Activated naive CD8-positive, alpha-beta T cell treated with anti-CD3 and anti-CD28 coated beads, Interleukin-2, amount 10 ng/mL, durations not matched to agents 7 days and 5 days (primary cell): ENCODE measurements at regions of chr10 and their contacts with region 1.

Region 1: GRCh38 chr10:103918053-103918846 is at the start of gene STN1:
- DNase-seq: peak; percentile 93
- ATAC-seq: peak; percentile 93
- H3K4me3 Mint-ChIP-seq: peak within 1 kb of the TSS; percentile 97
- H3K27ac Mint-ChIP-seq: peak within 1 kb of the TSS; percentile 96
- H3K4me1 Mint-ChIP-seq: peaks cover 27% of the 10 kb centered on the region
- H3K27me3 Mint-ChIP-seq: no peaks in the 10 kb centered on the region
- total RNA-seq, gene STN1: 53.7 to 58.5 TPM

Region 2: GRCh38 chr10:103727546-103727963 is 190.7 kb before region 1 on chr10:
- POLR2A ChIA-PET with region 1: no interaction called
- DNase-seq: no peak
- ATAC-seq: no peak
- H3K4me3 Mint-ChIP-seq: no peak overlapping the region
- H3K27ac Mint-ChIP-seq: no peak overlapping the region
- H3K4me1 Mint-ChIP-seq: peaks cover 4% of the 10 kb centered on the region
- H3K27me3 Mint-ChIP-seq: peaks cover 5% of the 10 kb centered on the region

Region 3: GRCh38 chr10:103872137-103872931 is 45.9 kb before region 1 on chr10:
- POLR2A ChIA-PET with region 1: no interaction called
- DNase-seq: no peak
- ATAC-seq: no peak
- H3K4me3 Mint-ChIP-seq: no peak overlapping the region
- H3K27ac Mint-ChIP-seq: no peak overlapping the region
- H3K4me1 Mint-ChIP-seq: peaks cover 2% of the 10 kb centered on the region
- H3K27me3 Mint-ChIP-seq: no peaks in the 10 kb centered on the region

Region 4: DNA sequence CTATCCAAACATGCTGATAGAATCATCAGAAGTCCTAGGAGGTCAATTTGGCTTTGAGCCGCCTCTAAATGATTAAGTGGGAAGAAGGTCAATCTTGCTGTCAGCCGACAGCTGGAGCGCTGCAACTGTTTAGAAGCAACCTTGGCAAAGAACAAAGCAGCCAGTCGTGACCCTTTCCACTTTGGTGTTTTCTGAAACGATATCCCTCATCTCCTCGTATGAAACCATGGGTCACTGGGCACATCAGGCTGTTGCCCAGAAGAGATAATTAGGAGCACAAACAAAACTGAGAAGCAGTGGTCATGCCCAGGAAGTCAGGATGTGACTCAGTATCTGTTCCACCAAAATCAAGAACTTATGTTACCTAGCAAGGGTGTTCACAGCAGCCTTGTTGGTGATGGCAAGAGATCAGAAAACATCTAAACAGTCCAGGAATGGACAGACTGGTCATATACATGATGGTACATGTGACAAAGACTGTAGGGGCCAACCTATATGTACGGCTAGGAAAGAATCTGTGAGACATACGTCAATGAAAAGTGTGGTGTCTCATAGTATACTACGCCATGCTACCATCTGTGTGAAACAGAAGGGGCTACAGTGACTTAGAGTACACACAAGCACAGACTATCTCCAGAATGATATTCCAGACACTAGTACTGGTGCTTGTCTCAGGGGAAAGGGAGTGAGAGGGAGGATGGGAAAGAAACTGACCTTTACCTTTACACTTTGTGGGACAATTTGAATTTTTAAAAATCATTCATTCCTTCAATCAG is 22.7 kb before region 1 on chr10:
- POLR2A ChIA-PET with region 1: interaction called, 21 read pairs
- DNase-seq: no peak
- ATAC-seq: peak; percentile 40
- H3K4me3 Mint-ChIP-seq: peak overlapping the region; percentile 38
- H3K27ac Mint-ChIP-seq: peak overlapping the region; percentile 67
- H3K4me1 Mint-ChIP-seq: peaks cover 29% of the 10 kb centered on the region
- H3K27me3 Mint-ChIP-seq: no peaks in the 10 kb centered on the region

Region 5: GRCh38 chr10:103901299-103901698 is 17.0 kb before region 1 on chr10:
- POLR2A ChIA-PET with region 1: interaction called, 21 read pairs
- DNase-seq: no peak
- ATAC-seq: peak; percentile 90
- H3K4me3 Mint-ChIP-seq: peak overlapping the region; percentile 65
- H3K27ac Mint-ChIP-seq: peak overlapping the region; percentile 23
- H3K4me1 Mint-ChIP-seq: peaks cover 37% of the 10 kb centered on the region
- H3K27me3 Mint-ChIP-seq: no peaks in the 10 kb centered on the region

Region 6: DNA sequence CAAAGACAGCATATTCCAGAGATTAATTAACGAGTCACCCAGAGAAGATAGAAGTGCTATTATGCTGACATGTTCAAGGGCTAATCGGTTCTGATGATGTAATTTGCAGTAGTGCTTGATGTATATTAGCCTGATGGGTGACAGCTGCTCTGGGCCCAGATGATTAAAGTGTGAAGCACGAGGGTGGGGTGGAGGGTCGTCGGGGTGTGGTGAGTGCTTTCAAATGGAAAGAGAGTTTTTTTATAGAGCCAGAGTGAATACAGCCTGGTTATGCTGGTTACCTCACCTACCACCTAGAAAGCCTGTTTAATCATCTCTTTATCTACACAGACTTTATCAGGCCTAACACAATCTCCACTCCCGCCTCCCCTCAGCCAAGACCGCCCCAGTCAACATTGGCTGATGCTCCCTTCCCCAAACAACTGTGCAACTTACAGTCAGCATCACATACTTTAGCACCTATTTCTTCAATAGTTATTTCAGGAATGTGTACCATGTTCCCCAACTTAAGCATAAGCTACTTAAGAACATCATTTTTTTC is 11.2 kb after region 1 on chr10:
- POLR2A ChIA-PET with region 1: no interaction called
- DNase-seq: no peak
- ATAC-seq: no peak
- H3K4me3 Mint-ChIP-seq: no peak overlapping the region
- H3K27ac Mint-ChIP-seq: no peak overlapping the region
- H3K4me1 Mint-ChIP-seq: no peaks in the 10 kb centered on the region
- H3K27me3 Mint-ChIP-seq: peaks cover 2% of the 10 kb centered on the region

Region 7: DNA sequence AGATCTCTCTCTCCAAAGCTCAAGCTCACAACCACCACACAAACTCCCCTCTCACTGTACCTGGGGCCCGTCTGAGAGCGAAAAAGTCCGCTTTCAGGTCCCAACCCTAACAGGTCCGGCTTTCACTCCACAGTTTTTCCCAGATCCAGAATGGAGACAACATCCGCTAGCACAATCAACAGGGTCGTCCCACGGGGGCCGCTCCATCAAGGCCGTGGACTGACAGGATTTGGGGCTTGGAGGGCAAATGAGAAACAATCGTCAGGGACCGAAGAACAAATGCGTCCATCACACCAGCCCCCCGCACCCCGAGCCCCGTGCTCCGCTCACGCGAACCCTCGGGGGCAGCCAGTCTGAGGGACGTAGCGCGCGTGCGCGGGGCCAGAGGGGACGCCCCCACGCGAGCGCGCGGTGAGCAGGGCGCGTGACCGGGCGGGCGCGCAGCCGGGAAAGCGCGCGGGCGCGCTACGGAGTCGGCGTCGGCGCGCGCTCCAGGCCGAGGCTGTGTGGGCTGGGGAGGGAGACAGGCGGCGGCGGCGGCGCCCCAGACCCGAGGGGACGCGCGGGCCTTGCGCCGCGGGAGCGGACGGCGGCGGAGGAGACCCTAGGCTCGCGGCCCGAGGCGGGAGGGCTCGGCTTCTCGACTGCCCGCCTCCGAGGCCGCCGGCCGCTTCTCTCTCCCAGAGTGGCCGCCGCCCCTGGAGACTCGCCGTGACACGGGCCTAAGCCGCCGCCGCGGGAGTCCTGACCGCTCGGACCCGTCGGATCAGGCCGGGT is 48.6 kb after region 1 on chr10 and contains the start of gene SLK:
- POLR2A ChIA-PET with region 1: interaction called, 17 read pairs
- DNase-seq: peak; percentile 96
- ATAC-seq: peak; percentile 87
- H3K4me3 Mint-ChIP-seq: peak within 1 kb of the TSS; percentile 99
- H3K27ac Mint-ChIP-seq: peak within 1 kb of the TSS; percentile 96
- H3K4me1 Mint-ChIP-seq: peaks cover 27% of the 10 kb centered on the region
- H3K27me3 Mint-ChIP-seq: no peaks in the 10 kb centered on the region
- total RNA-seq, gene SLK: 37.9 to 38.4 TPM